ENCODE measurements at regions of chr19 and their contacts with region 1.

Region 1: DNA sequence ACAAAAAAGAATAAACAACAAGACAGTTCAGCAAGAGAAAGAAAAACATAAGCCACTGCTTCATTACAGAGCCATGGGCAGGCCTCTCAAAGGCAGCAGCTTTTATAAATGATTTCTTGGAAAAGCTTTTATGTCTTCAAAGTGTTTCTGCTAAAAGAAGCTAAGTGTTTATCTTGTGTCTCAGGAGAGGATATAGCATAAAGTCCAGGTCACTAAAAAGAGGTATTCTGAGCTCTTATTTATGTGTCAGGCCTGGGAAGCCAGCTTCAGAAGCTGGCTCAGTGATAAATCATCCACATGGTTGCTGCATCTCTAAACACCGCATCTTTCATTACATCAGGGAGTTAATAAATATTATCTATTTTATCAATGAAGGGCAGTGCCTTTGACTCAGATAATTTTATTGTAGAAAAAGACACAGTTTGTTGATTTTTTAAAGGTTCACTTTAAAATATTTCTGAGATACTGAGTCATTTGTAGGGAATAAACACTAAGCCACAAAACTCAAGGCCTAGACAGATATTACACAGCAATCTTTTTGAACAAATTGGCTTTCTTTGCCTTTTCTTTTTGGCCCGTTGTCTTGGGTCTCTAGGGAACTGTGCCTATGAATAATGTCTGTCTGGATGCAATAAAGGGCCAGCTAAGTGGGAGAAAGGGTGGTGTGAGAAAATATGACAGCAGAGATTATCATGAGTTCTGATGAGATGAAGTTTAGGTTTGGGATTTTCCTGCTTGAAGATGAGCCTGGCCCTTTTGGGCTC is 1086.6 kb downstream of the UQCRFS1 start:
- DNase-seq: no peak
- ATAC-seq: no peak
- H3K4me3 ChIP-seq: no peak overlapping the region
- H3K27ac ChIP-seq: no peak overlapping the region
- H3K4me1 ChIP-seq: no peaks in the 10 kb centered on the region
- H3K27me3 ChIP-seq: no peaks in the 10 kb centered on the region
- CTCF ChIP-seq: no peak
- EP300 ChIP-seq: no peak
- POLR2A ChIP-seq: no peak
- RAD21 ChIP-seq: no peak

Region 2: GRCh38 chr19:28074737-28075136 is 51.6 kb before region 1 on chr19:
- CTCF ChIA-PET with region 1: no interaction called
- POLR2A ChIA-PET with region 1: no interaction called
- in situ Hi-C with region 1: no loop called
- intact Hi-C with region 1: no loop called
- DNase-seq: no peak
- ATAC-seq: no peak
- H3K4me3 ChIP-seq: no peak overlapping the region
- H3K27ac ChIP-seq: no peak overlapping the region
- H3K4me1 ChIP-seq: no peaks in the 10 kb centered on the region
- H3K27me3 ChIP-seq: no peaks in the 10 kb centered on the region
- CTCF ChIP-seq: no peak
- EP300 ChIP-seq: no peak
- POLR2A ChIP-seq: no peak
- RAD21 ChIP-seq: no peak

Region 3: GRCh38 chr19:28184997-28185396 is 58.7 kb after region 1 on chr19:
- CTCF ChIA-PET with region 1: no interaction called
- POLR2A ChIA-PET with region 1: no interaction called
- in situ Hi-C with region 1: no loop called
- intact Hi-C with region 1: no loop called
- DNase-seq: no peak
- ATAC-seq: no peak
- H3K4me3 ChIP-seq: no peak overlapping the region
- H3K27ac ChIP-seq: no peak overlapping the region
- H3K4me1 ChIP-seq: no peaks in the 10 kb centered on the region
- H3K27me3 ChIP-seq: no peaks in the 10 kb centered on the region
- CTCF ChIP-seq: no peak
- EP300 ChIP-seq: no peak
- POLR2A ChIP-seq: no peak
- RAD21 ChIP-seq: no peak

Region 4: DNA sequence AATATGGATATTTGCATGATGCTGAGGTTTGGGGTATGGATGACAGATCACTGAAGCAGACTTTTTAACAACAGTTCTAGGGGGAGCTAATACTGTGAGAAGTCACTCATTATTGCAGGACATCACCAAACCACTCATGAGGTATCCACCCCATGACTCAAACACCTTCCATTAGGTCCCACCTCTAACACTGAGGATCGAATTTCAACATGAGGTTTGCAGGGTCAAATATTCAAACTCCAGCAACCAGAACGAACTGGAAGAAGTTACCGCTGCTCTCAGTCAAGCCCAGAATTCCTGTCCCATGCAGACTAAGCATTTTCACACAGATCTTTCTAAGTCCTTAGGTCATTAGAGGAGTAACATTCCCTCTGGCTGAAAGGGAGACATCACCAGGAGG is 327.8 kb after region 1 on chr19:
- CTCF ChIA-PET with region 1: no interaction called
- POLR2A ChIA-PET with region 1: no interaction called
- in situ Hi-C with region 1: no loop called
- intact Hi-C with region 1: loop called (anchors 10 kb)
- DNase-seq: no peak
- ATAC-seq: no peak
- H3K4me3 ChIP-seq: no peak overlapping the region
- H3K27ac ChIP-seq: no peak overlapping the region
- H3K4me1 ChIP-seq: no peaks in the 10 kb centered on the region
- H3K27me3 ChIP-seq: no peaks in the 10 kb centered on the region
- CTCF ChIP-seq: no peak
- EP300 ChIP-seq: no peak
- POLR2A ChIP-seq: no peak
- RAD21 ChIP-seq: no peak